ENCODE measurements at regions of chr10 and their contacts with region 1.

Region 1: GRCh38 chr10:45420453-45421192 is 46.6 kb downstream of the ALOX5 start:
- DNase-seq: peak in 9 of 10 donors; percentile 36 to 72 (median 56)
- ATAC-seq: peak; percentile 47 to 58
- H3K4me3 Mint-ChIP-seq: peak overlapping the region; percentile 89 to 98 (median 94)
- H3K27ac Mint-ChIP-seq: peak overlapping the region; percentile 95 to 99 (median 98)
- H3K4me1 Mint-ChIP-seq: peaks cover 40 to 80% (median 64%) of the 10 kb centered on the region in 4 donors
- H3K27me3 Mint-ChIP-seq: peaks cover 0 to 4% (median 0%) of the 10 kb centered on the region in 5 donors

Region 2: DNA sequence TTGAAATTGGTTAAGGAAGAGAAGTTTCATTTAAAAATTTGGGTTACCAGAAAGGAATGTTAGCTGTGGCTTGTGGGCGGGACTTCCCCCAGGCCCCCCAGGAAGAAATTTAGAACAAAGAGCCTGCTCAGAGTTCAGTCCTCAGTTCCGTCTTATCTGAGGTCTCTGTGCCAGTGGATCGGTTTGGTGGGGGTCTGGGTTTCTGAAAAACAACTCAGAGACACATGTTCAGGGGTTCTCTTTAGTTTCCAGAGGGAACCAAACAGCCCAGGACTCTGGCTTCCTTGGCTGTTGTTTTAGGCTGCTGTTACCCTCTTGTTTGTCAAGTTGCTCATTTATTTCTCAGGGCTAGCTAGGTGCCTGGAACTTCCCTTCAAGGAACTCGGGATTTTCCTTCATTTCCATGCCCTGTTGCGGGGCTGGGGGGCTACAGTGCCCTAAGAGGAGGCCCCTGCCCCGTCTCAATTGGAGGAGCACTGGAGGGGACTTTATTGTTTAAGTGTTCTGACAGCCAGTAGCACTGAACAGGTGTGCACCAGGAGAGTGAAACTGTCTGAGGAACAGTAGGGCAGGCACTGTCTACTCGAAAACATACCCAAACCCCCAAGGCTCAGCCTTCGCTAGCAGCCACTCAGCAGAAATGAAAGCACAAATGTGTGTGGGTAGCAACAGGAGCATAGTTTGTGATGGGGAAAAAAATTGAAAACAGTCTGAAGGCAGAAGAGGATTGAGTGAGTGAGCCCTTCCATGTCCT is 13.3 kb after region 1 on chr10:
- POLR2A ChIA-PET with region 1: interaction called, 38 read pairs
- DNase-seq: peak in 2 of 10 donors; percentile 31 to 42
- ATAC-seq: peak; percentile 83 to 86
- H3K4me3 Mint-ChIP-seq: peak overlapping the region; percentile 8 to 77 (median 66)
- H3K27ac Mint-ChIP-seq: peak overlapping the region; percentile 70 to 94 (median 91)
- H3K4me1 Mint-ChIP-seq: peaks cover 26 to 37% (median 28%) of the 10 kb centered on the region in 4 donors
- H3K27me3 Mint-ChIP-seq: no peaks in the 10 kb centered on the region